CD4-positive, alpha-beta memory T cell (primary cell): ENCODE measurements at regions of chr4 and their contacts with region 1.

Region 1: GRCh38 chr4:3106339-3107186 is 32.1 kb downstream of the HTT start:
- DNase-seq: peak; percentile 65 to 83 (median 70)
- H3K4me3 ChIP-seq: no peak overlapping the region
- H3K4me3 Mint-ChIP-seq: peak overlapping the region in 1 of 8 donors; percentile 26
- H3K27ac ChIP-seq: no peak overlapping the region
- H3K27ac Mint-ChIP-seq: peak overlapping the region; percentile 1 to 87 (median 42)
- H3K4me1 ChIP-seq: peaks cover 3% of the 10 kb centered on the region
- H3K4me1 Mint-ChIP-seq: peaks cover 7 to 12% (median 9%) of the 10 kb centered on the region in 4 donors
- H3K27me3 ChIP-seq: no peaks in the 10 kb centered on the region
- H3K27me3 Mint-ChIP-seq: no peaks in the 10 kb centered on the region

Region 2: GRCh38 chr4:2923141-2923551 is 183.4 kb before region 1 on chr4:
- CTCF ChIA-PET with region 1: no interaction called
- POLR2A ChIA-PET with region 1: no interaction called
- intact Hi-C with region 1: no loop called
- DNase-seq: no peak
- H3K4me3 ChIP-seq: no peak overlapping the region
- H3K4me3 Mint-ChIP-seq: peak overlapping the region in 6 of 8 donors; percentile 5 to 75 (median 50)
- H3K27ac ChIP-seq: peak overlapping the region; percentile 41
- H3K27ac Mint-ChIP-seq: peak overlapping the region; percentile 32 to 92 (median 78)
- H3K4me1 ChIP-seq: peaks cover 21% of the 10 kb centered on the region
- H3K4me1 Mint-ChIP-seq: peaks cover 28 to 53% (median 42%) of the 10 kb centered on the region in 4 donors
- H3K27me3 ChIP-seq: no peaks in the 10 kb centered on the region
- H3K27me3 Mint-ChIP-seq: no peaks in the 10 kb centered on the region

Region 3: GRCh38 chr4:3047464-3048286 is 58.9 kb before region 1 on chr4:
- CTCF ChIA-PET with region 1: interaction called, 3 read pairs
- POLR2A ChIA-PET with region 1: no interaction called
- intact Hi-C with region 1: loop called (anchors 1 kb)
- DNase-seq: peak; percentile 76 to 93 (median 82)
- H3K4me3 ChIP-seq: peak overlapping the region; percentile 42 to 87
- H3K4me3 Mint-ChIP-seq: peak overlapping the region; percentile 81 to 93 (median 88)
- H3K27ac ChIP-seq: peak overlapping the region; percentile 56
- H3K27ac Mint-ChIP-seq: peak overlapping the region; percentile 82 to 98 (median 94)
- H3K4me1 ChIP-seq: peaks cover 27% of the 10 kb centered on the region
- H3K4me1 Mint-ChIP-seq: peaks cover 20 to 42% (median 24%) of the 10 kb centered on the region in 4 donors
- H3K27me3 ChIP-seq: no peaks in the 10 kb centered on the region
- H3K27me3 Mint-ChIP-seq: no peaks in the 10 kb centered on the region

Region 4: GRCh38 chr4:3136453-3136852 is 29.9 kb after region 1 on chr4:
- CTCF ChIA-PET with region 1: interaction called, 21 read pairs
- POLR2A ChIA-PET with region 1: no interaction called
- intact Hi-C with region 1: no loop called
- DNase-seq: peak in 1 of 5 donors; percentile 1
- H3K4me3 ChIP-seq: no peak overlapping the region
- H3K4me3 Mint-ChIP-seq: no peak overlapping the region
- H3K27ac ChIP-seq: no peak overlapping the region
- H3K27ac Mint-ChIP-seq: no peak overlapping the region
- H3K4me1 ChIP-seq: no peaks in the 10 kb centered on the region
- H3K4me1 Mint-ChIP-seq: no peaks in the 10 kb centered on the region
- H3K27me3 ChIP-seq: no peaks in the 10 kb centered on the region
- H3K27me3 Mint-ChIP-seq: no peaks in the 10 kb centered on the region

Region 5: DNA sequence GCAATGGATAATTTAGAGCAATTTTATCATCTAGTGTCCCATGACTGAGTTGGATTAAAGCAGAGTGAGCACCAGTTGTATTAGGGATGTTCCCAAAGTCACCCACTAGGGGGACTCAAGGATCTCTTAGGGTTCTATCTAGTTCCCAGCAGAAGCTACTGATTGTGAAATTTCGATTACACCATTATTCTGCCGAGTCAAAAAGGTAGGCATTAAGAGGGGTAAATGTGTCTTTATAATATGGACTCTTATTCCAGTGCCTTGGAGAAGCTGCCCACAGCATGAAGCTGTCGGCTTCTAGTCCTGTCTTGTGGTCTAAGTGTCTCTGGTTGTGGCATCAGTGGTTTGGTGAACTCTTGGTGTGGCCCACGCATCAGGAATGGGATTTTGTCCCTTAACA is 239.6 kb after region 1 on chr4:
- CTCF ChIA-PET with region 1: interaction called, 3 read pairs
- POLR2A ChIA-PET with region 1: no interaction called
- intact Hi-C with region 1: loop called (anchors 1 kb)
- DNase-seq: peak; percentile 46 to 58 (median 54)
- H3K4me3 ChIP-seq: no peak overlapping the region
- H3K4me3 Mint-ChIP-seq: no peak overlapping the region
- H3K27ac ChIP-seq: no peak overlapping the region
- H3K27ac Mint-ChIP-seq: peak overlapping the region in 3 of 7 donors; percentile 1 to 32 (median 5)
- H3K4me1 ChIP-seq: peaks cover 8% of the 10 kb centered on the region
- H3K4me1 Mint-ChIP-seq: peaks cover 8 to 19% (median 14%) of the 10 kb centered on the region in 4 donors
- H3K27me3 ChIP-seq: no peaks in the 10 kb centered on the region
- H3K27me3 Mint-ChIP-seq: no peaks in the 10 kb centered on the region

Region 6: GRCh38 chr4:3480528-3481112 is 374.1 kb after region 1 on chr4:
- CTCF ChIA-PET with region 1: interaction called, 37 read pairs
- POLR2A ChIA-PET with region 1: no interaction called
- intact Hi-C with region 1: loop called (anchors 1 kb)
- DNase-seq: peak in 4 of 5 donors; percentile 54 to 67 (median 62)
- H3K4me3 ChIP-seq: no peak overlapping the region
- H3K4me3 Mint-ChIP-seq: no peak overlapping the region
- H3K27ac ChIP-seq: no peak overlapping the region
- H3K27ac Mint-ChIP-seq: peak overlapping the region in 1 of 7 donors; percentile 12
- H3K4me1 ChIP-seq: peaks cover 7% of the 10 kb centered on the region
- H3K4me1 Mint-ChIP-seq: peaks cover 0 to 4% (median under 1%) of the 10 kb centered on the region in 4 donors
- H3K27me3 ChIP-seq: no peaks in the 10 kb centered on the region
- H3K27me3 Mint-ChIP-seq: peaks cover 13 to 14% of the 10 kb centered on the region in 2 donors